ENCODE measurements at regions of chr5 and their contacts with region 1.

Region 1: DNA sequence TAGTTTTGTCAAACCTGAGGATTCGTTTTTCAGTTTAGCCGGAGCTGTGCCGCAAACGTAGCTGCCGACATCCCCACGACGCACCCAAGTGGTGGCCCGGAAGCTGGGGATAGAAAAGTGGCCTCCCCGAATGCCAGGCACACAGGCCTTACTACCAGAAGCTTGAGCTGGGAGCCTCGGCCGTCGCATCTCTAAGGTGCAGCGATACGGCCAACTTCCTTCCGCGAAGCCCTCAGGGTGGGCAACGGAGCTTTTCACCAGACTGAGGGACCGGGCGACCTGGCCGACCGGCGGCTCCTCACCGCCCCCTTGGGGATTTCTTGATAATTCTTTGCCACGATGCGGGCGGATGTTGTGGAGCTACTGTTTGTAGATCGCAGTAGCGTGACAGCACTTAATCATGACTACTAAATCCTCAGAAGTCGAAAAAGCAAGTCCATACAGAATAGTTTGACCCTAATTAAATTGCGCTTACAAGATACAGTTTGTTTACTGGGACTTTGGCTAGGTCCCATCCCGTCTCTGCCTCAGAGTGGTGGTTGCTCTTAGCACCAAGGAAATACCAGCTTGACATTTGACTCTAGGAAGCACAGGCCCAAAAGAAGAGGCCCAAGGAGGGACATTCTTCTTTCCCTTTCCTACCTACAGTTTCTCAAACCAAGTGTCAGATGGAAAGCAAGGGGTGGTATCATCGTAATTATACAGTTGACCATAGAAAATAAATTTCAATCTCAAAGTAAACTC is 613 bp upstream of the TMEM267 start:
- DNase-seq: peak; percentile 90
- H3K4me3 ChIP-seq: peak overlapping the region; percentile 83
- H3K27ac ChIP-seq: peak overlapping the region; percentile 94
- H3K4me1 ChIP-seq: peaks cover 13% of the 10 kb centered on the region
- H3K27me3 ChIP-seq: no peaks in the 10 kb centered on the region
- CTCF ChIP-seq: peak; percentile 80

Region 2: DNA sequence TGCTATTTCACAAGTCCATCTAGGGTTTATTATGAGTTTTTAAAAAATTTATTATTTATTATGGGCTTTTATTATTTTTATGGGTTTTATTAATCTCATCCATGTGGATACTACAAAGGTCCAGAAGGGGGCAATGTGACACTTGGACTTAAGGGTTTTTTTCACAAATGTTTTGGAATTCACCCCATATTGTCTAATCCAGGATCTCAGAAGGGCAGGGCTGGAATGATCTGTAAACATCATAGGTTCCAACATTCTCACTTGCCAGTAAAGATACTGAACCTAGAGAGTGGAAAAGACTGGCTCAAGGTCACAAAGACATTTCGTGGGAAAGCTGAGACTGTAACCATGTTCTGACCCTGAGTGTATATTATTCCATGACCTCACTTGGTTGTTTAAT is 256.6 kb before region 1 on chr5:
- CTCF ChIA-PET with region 1: no interaction called
- POLR2A ChIA-PET with region 1: no interaction called
- intact Hi-C with region 1: no loop called
- DNase-seq: peak; percentile 46
- H3K4me3 ChIP-seq: no peak overlapping the region
- H3K27ac ChIP-seq: no peak overlapping the region
- H3K4me1 ChIP-seq: no peaks in the 10 kb centered on the region
- H3K27me3 ChIP-seq: no peaks in the 10 kb centered on the region
- CTCF ChIP-seq: no peak; the same call in 1 of the 2 replicates

Region 3: DNA sequence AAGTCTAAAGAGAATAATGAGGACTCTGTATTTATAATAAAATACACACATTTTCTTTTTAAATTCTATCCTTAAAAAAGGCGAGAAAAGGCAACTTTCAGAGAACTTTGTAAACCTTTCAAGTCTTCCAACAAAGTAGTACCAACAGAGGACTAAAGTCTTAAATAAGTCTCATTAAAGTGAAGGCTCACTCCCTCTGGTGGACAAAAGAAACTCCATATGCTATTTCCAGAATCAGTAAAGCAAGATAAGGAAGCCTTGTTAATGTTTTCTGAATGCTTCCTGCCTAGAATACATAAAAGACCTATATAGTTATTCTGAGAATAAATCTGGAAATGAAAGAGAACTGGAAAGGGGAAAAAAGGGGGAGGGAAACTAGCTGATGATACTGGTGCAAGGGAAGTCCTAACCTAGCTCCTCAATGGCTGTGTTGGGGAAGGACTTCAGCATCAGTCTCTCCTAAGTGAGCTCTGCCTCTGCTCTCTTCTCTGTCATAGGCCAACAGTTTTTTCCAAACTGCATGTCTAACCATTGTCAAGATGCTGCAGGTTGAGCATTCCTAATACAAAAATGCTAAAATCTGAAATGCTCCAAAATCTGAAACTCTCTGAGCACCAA is 178.2 kb before region 1 on chr5:
- CTCF ChIA-PET with region 1: no interaction called
- POLR2A ChIA-PET with region 1: interaction called, 9 read pairs
- intact Hi-C with region 1: loop called (anchors 5 kb)
- DNase-seq: peak; percentile 80
- H3K4me3 ChIP-seq: no peak overlapping the region
- H3K27ac ChIP-seq: no peak overlapping the region
- H3K4me1 ChIP-seq: peaks cover 44% of the 10 kb centered on the region
- H3K27me3 ChIP-seq: no peaks in the 10 kb centered on the region
- CTCF ChIP-seq: peak; percentile 85

Region 4: GRCh38 chr5:43396762-43397304 is 87.4 kb before region 1 on chr5:
- CTCF ChIA-PET with region 1: interaction called, 7 read pairs
- POLR2A ChIA-PET with region 1: no interaction called
- intact Hi-C with region 1: loop called (anchors 5 kb)
- DNase-seq: peak; percentile 46
- H3K4me3 ChIP-seq: peak overlapping the region; percentile 46
- H3K27ac ChIP-seq: no peak overlapping the region
- H3K4me1 ChIP-seq: no peaks in the 10 kb centered on the region
- H3K27me3 ChIP-seq: peaks cover 14% of the 10 kb centered on the region
- CTCF ChIP-seq: no peak

Measured in A673 (cell line).